ENCODE measurements at regions of chr14 and their contacts with region 1.

Region 1: GRCh38 chr14:59150990-59151389 is 37.5 kb upstream of the DAAM1 start:
- DNase-seq: peak; percentile 57
- ATAC-seq: peak; percentile 92
- H3K4me3 ChIP-seq: peak overlapping the region in 2 of 5 experiments; percentile 0 to 19
- H3K4me3 Mint-ChIP-seq: peak overlapping the region; percentile 64
- H3K27ac ChIP-seq: no peak overlapping the region
- H3K27ac Mint-ChIP-seq: peak overlapping the region; percentile 77
- H3K4me1 ChIP-seq: peaks cover 45 to 47% of the 10 kb centered on the region in 2 donors
- H3K4me1 Mint-ChIP-seq: peaks cover 60% of the 10 kb centered on the region
- H3K27me3 ChIP-seq: no peaks in the 10 kb centered on the region
- H3K27me3 Mint-ChIP-seq: no peaks in the 10 kb centered on the region
- CTCF ChIP-seq: no peak

Region 2: DNA sequence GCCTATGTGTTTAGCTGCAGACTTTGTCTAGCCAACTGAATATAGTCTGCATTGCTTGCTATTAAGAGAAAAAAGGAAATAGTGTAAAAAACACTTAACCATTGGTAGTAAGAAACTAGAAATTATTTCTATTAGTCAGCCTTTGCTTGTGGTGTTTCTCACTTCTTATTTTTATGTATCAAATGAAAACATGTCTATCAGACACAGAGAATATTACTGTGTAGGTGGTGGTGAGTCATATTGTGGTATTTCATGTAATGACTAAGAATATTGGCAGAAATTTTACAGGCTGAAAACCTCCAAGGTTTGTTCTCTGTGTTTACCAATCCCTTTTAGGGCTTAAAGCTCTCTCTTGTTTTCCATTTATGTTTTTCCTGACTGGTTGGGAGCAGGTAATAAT is 124.7 kb after region 1 on chr14:
- CTCF ChIA-PET with region 1: no interaction called
- POLR2A ChIA-PET with region 1: no interaction called
- intact Hi-C with region 1: loop called (anchors 10 kb)
- DNase-seq: no peak
- ATAC-seq: peak; percentile 64
- H3K4me3 ChIP-seq: no peak overlapping the region
- H3K4me3 Mint-ChIP-seq: peak overlapping the region; percentile 40
- H3K27ac ChIP-seq: no peak overlapping the region
- H3K27ac Mint-ChIP-seq: peak overlapping the region; percentile 1
- H3K4me1 ChIP-seq: peaks cover 9 to 16% of the 10 kb centered on the region in 2 donors
- H3K4me1 Mint-ChIP-seq: peaks cover 26% of the 10 kb centered on the region
- H3K27me3 ChIP-seq: no peaks in the 10 kb centered on the region
- H3K27me3 Mint-ChIP-seq: no peaks in the 10 kb centered on the region
- CTCF ChIP-seq: no peak

Measured in B cell (primary cell).